ENCODE measurements at regions of chr18 and their contacts with region 1.

Region 1: DNA sequence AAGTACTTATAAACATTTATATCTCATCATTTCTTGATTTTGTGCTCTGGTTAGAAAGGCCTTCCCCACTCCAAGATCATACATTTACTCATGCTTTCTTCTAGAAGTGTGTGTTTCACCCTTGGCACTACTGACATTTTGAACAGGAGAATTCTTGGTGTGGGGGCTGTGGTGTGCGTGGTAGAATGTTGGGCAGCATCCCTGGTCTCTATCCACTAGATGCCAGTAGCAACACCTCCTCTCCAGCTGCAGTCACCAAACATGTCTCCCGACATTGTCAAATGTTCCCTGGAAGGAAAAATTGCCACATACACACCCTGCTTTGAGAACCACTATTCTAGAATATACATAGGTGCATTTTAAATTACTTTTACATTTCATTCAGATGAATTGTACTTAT is 8.7 kb upstream of the TGIF1 start:
- DNase-seq: peak in 1 of 2 experiments; percentile 19
- H3K4me3 ChIP-seq: no peak overlapping the region
- H3K27ac ChIP-seq: peak overlapping the region; percentile 37
- H3K4me1 ChIP-seq: peaks cover 29% of the 10 kb centered on the region
- H3K27me3 ChIP-seq: no peaks in the 10 kb centered on the region
- CTCF ChIP-seq: no peak

Region 2: DNA sequence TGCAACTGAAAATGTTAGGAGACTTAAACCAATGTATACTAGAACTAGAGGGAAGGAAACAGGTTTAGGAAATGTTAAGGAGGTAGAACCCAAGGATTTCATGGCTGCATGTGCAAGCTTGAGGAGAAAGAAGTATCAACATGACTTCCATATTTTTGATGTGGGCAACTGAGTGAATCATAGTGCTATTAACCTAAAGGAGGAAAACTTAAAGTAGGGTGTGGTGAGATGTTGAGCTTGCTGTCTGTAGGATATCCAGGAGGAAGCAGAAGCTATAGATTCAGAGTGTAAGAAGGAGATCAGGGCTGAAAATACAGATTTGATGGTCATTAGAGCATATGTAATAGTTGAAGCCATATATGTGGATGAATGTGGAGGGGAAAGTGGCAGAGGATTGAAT is 838.4 kb before region 1 on chr18:
- CTCF ChIA-PET with region 1: interaction called, 10 read pairs
- POLR2A ChIA-PET with region 1: no interaction called
- intact Hi-C with region 1: no loop called
- DNase-seq: no peak
- H3K4me3 ChIP-seq: no peak overlapping the region
- H3K27ac ChIP-seq: no peak overlapping the region
- H3K4me1 ChIP-seq: peaks cover 14% of the 10 kb centered on the region; the same call in 1 of the 2 replicates
- H3K27me3 ChIP-seq: no peaks in the 10 kb centered on the region
- CTCF ChIP-seq: no peak

Region 3: GRCh38 chr18:3498698-3499471 is 57.6 kb after region 1 on chr18:
- CTCF ChIA-PET with region 1: no interaction called
- POLR2A ChIA-PET with region 1: no interaction called
- intact Hi-C with region 1: no loop called
- DNase-seq: no peak
- H3K4me3 ChIP-seq: no peak overlapping the region
- H3K27ac ChIP-seq: no peak overlapping the region
- H3K4me1 ChIP-seq: 0 out of 2 replicates have a peak, but pooled peaks cover 5% of the 10 kb centered on the region
- H3K27me3 ChIP-seq: no peaks in the 10 kb centered on the region
- CTCF ChIP-seq: no peak